Stomach (tissue), 19 donors: ENCODE measurements at regions of chr5 and their contacts with region 1.

Region 1: GRCh38 chr5:170420780-170421412 is 31.7 kb upstream of the KCNMB1 start:
- DNase-seq: peak; percentile 51 to 90
- H3K4me3 ChIP-seq: no peak overlapping the region
- H3K27ac ChIP-seq: no peak overlapping the region
- H3K4me1 ChIP-seq: peaks cover 0 to 18% (median 9%) of the 10 kb centered on the region in 4 donors
- H3K27me3 ChIP-seq: no peaks in the 10 kb centered on the region
- CTCF ChIP-seq: peak in 5 of 7 experiments; percentile 54 to 80 (median 68)
- EP300 ChIP-seq: no peak
- POLR2A ChIP-seq: no peak

Region 2: DNA sequence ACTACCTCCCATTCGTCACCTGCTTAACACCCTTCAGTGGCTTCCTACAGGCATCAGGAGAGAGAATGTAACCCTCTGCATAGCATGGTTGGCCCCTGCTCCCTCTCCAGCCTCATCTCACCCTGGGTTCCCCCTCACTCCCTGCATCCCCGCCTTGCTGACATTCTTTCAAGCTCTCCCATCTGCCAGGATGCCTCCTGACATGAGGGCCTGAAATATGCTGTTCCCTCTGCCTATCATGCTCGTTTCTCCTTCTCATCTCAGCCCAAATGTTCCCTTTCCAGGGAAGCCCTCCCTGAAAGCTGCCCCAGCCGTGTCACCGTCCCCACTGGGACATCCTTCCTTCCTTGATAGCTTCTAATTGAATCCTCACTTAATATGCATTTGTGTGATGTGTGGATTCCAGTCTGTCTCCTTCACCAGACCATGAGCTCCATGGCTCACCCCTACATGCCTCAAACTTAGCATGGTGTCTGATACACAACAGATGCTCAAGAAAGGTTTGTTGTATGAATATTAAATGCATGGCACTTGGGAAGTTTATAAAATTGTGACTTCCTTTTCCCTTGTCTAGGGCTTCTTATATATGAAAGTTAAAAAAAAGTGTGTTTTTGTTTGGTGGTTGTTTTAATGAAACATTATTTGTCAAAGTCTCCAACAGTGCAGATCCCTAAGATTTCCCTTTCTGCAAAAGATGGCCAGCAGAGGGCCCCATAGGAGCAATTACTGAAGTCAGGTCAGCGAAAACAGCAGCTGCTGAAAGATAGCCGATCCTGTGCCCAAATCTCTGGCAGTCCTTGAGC is 195.4 kb before region 1 on chr5:
- intact Hi-C with region 1: loop called (anchors 5 kb)
- DNase-seq: peak; percentile 74 to 88
- H3K4me3 ChIP-seq: no peak overlapping the region
- H3K27ac ChIP-seq: no peak overlapping the region
- H3K4me1 ChIP-seq: peaks cover 0 to 5% (median 0%) of the 10 kb centered on the region in 4 donors
- H3K27me3 ChIP-seq: no peaks in the 10 kb centered on the region
- CTCF ChIP-seq: peak in 4 of 7 experiments; percentile 58 to 72 (median 68)
- EP300 ChIP-seq: no peak
- POLR2A ChIP-seq: no peak

Region 3: GRCh38 chr5:170278611-170279452 is 142.1 kb before region 1 on chr5:
- intact Hi-C with region 1: loop called (anchors 10 kb)
- DNase-seq: peak; percentile 62 to 77
- H3K4me3 ChIP-seq: peak overlapping the region in 1 of 4 donors; percentile 1
- H3K27ac ChIP-seq: peak overlapping the region in 4 of 5 donors; percentile 29 to 75 (median 66)
- H3K4me1 ChIP-seq: peaks cover 13 to 67% (median 35%) of the 10 kb centered on the region in 4 donors
- H3K27me3 ChIP-seq: no peaks in the 10 kb centered on the region
- CTCF ChIP-seq: no peak
- EP300 ChIP-seq: no peak
- POLR2A ChIP-seq: no peak

Region 4: GRCh38 chr5:170848033-170848432 is 427.1 kb after region 1 on chr5:
- intact Hi-C with region 1: no loop called
- DNase-seq: no peak
- H3K4me3 ChIP-seq: no peak overlapping the region
- H3K27ac ChIP-seq: no peak overlapping the region
- H3K4me1 ChIP-seq: no peaks in the 10 kb centered on the region
- H3K27me3 ChIP-seq: no peaks in the 10 kb centered on the region
- CTCF ChIP-seq: no peak
- EP300 ChIP-seq: no peak
- POLR2A ChIP-seq: no peak